HCT116 (cell line): ENCODE measurements at regions of chr10 and their contacts with region 1.

Region 1: DNA sequence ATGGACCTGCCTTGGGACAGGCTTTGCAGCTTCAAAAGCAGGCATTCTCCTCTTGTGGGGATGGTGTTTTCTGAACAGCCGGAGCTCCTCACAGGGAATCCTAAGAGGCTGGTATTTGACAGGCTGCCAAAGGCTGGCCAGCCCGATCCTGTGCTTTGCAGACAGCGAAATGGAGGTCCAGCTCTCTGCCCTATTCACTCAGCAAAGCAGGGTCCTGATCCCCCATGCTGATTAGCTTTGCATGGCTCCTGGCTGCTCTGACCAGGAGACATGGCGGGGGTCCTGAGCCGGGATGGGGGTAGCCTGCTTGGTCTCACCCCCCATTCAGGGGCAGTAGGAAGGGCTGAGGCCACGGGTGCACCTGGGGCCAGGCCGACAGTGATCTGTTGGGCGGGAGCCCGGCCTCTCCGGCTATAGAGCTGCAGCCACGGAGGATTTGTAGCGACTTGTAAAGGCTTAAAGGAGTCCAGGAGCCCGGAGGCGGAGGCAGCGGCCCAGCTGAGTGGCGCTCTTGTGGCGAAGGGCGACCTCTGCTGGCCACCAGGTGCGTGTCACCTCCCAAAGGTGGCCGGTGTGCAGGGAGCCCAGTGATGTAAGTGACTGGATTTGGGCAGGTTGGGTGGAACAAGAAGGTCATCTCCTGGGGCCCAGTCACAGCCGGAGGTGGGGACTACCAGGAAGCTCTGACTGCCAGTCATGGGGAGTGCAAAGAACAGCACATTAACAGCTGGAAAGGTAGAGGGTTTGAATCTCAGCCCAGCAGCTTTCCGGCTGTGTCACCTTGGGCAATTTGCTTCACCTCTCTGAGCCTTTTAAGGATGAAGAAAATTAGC is 126.5 kb downstream of the ZMIZ1 start:
- DNase-seq: peak; percentile 52
- ATAC-seq: peak; percentile 90
- H3K4me3 ChIP-seq: no peak overlapping the region
- H3K27ac ChIP-seq: peak overlapping the region; percentile 15; the same call in 1 of the 2 replicates
- H3K4me1 ChIP-seq: peaks cover 18 to 49% of the 10 kb centered on the region in 2 experiments
- H3K27me3 ChIP-seq: no peaks in the 10 kb centered on the region
- CTCF ChIP-seq: peak; percentile 79 to 97 (median 93)
- POLR2A ChIP-seq: no peak
- RAD21 ChIP-seq: peak; percentile 98

Region 2: GRCh38 chr10:78211561-78212051 is 983.7 kb before region 1 on chr10:
- CTCF ChIA-PET with region 1: interaction called, 4 read pairs
- POLR2A ChIA-PET with region 1: no interaction called
- RAD21 ChIA-PET with region 1: no interaction called
- intact Hi-C with region 1: loop called (anchors 1 kb)
- DNase-seq: peak; percentile 6
- ATAC-seq: peak; percentile 60
- H3K4me3 ChIP-seq: no peak overlapping the region
- H3K27ac ChIP-seq: no peak overlapping the region
- H3K4me1 ChIP-seq: no peaks in the 10 kb centered on the region
- H3K27me3 ChIP-seq: peaks cover 15% of the 10 kb centered on the region; the same call in 1 of the 2 replicates
- CTCF ChIP-seq: peak; percentile 48 to 61 (median 59); a peak in 5 of 6 replicates
- POLR2A ChIP-seq: no peak
- RAD21 ChIP-seq: peak; percentile 80

Region 3: GRCh38 chr10:78657163-78657861 is 538.0 kb before region 1 on chr10:
- CTCF ChIA-PET with region 1: interaction called, 8 read pairs
- POLR2A ChIA-PET with region 1: no interaction called
- RAD21 ChIA-PET with region 1: interaction called in 1 of 2 experiments, 3 read pairs
- intact Hi-C with region 1: loop called (anchors 5 kb)
- DNase-seq: peak; percentile 43
- ATAC-seq: peak; percentile 99
- H3K4me3 ChIP-seq: no peak overlapping the region
- H3K27ac ChIP-seq: no peak overlapping the region
- H3K4me1 ChIP-seq: no peaks in the 10 kb centered on the region
- H3K27me3 ChIP-seq: peaks cover 27% of the 10 kb centered on the region; the same call in 1 of the 2 replicates
- CTCF ChIP-seq: peak; percentile 55 to 92 (median 74); a peak in 5 of 6 replicates
- POLR2A ChIP-seq: no peak
- RAD21 ChIP-seq: peak; percentile 79

Region 4: GRCh38 chr10:78846760-78847159 is 348.5 kb before region 1 on chr10:
- CTCF ChIA-PET with region 1: no interaction called
- POLR2A ChIA-PET with region 1: no interaction called
- RAD21 ChIA-PET with region 1: no interaction called
- intact Hi-C with region 1: loop called (anchors 5 kb)
- DNase-seq: no peak
- ATAC-seq: no peak
- H3K4me3 ChIP-seq: no peak overlapping the region
- H3K27ac ChIP-seq: no peak overlapping the region
- H3K4me1 ChIP-seq: no peaks in the 10 kb centered on the region
- H3K27me3 ChIP-seq: no peaks in the 10 kb centered on the region
- CTCF ChIP-seq: no peak
- POLR2A ChIP-seq: no peak
- RAD21 ChIP-seq: no peak

Region 5: DNA sequence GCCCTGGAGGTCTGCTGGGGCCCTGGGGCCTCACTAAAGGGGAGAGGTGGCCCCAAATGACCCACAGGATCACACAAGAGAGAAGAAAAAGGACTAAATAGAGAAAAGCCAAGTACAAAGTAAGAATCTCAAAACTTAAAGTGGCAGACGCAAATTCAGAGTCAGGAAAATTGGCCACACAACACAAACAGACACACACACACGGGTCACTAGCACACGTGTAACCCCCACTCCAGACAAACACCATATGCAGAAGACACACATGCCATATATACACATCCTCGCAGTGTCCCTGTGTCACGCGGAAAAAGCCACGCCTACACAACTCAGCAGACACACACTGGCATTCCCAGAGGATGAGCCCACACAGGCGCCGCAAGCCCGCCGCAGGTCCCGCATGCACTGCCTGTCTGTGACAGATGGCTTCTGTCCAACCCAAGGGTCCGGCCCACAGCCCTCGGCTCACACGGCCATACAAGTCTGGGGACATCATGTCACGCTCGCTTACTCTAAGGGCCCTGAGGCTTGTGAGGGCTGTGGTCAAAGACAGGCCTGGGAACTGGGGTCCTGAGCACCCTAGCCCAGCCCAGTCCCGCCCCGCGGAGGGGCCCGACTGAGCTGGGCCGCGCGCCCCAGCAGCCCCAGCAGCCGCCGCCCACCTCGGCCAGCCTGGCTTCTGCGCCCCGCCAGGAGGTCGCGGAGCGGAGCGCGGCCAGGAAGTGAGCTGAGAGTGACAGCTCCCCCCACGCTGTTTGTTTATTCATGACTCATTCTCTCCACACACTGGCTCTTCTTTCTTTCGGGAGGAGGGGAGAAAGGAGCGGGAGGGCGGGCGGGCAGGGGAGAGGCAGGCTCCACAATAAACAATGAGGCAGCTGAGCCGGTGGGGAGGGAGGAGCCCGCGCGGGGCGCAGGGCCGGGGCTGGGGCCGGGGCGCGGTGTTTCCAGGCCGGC is 222.1 kb before region 1 on chr10:
- CTCF ChIA-PET with region 1: interaction called, 9 read pairs
- POLR2A ChIA-PET with region 1: interaction called, 3 read pairs
- RAD21 ChIA-PET with region 1: no interaction called
- intact Hi-C with region 1: loop called (anchors 5 kb)
- DNase-seq: peak; percentile 84
- ATAC-seq: peak; percentile 64
- H3K4me3 ChIP-seq: peak overlapping the region; percentile 42 to 61
- H3K27ac ChIP-seq: peak overlapping the region; percentile 96
- H3K4me1 ChIP-seq: peaks cover 30 to 48% of the 10 kb centered on the region in 2 experiments
- H3K27me3 ChIP-seq: no peaks in the 10 kb centered on the region
- CTCF ChIP-seq: no peak
- POLR2A ChIP-seq: no peak
- RAD21 ChIP-seq: no peak

Region 6: GRCh38 chr10:79149662-79150443 is 45.5 kb before region 1 on chr10:
- CTCF ChIA-PET with region 1: interaction called, 7 read pairs
- POLR2A ChIA-PET with region 1: no interaction called
- RAD21 ChIA-PET with region 1: no interaction called
- intact Hi-C with region 1: loop called (anchors 2 kb)
- DNase-seq: peak; percentile 48
- ATAC-seq: peak; percentile 74
- H3K4me3 ChIP-seq: peak overlapping the region in 1 of 2 experiments; percentile 32; a peak in 2 of 4 replicates
- H3K27ac ChIP-seq: peak overlapping the region; percentile 94
- H3K4me1 ChIP-seq: peaks cover 54 to 93% of the 10 kb centered on the region in 2 experiments
- H3K27me3 ChIP-seq: no peaks in the 10 kb centered on the region
- CTCF ChIP-seq: no peak
- POLR2A ChIP-seq: no peak
- RAD21 ChIP-seq: no peak